T-cell (primary cell): ENCODE measurements at regions of chr3 and their contacts with region 1.

Region 1: GRCh38 chr3:88031642-88032077 is 27.1 kb downstream of the CGGBP1 start:
- DNase-seq: peak in 13 of 35 experiments; percentile 2 to 64 (median 6)
- ATAC-seq: peak; percentile 79 to 88 (median 84)
- H3K4me3 ChIP-seq: peak overlapping the region; percentile 39 to 68
- H3K4me3 Mint-ChIP-seq: peak overlapping the region; percentile 81 to 83 (median 81)
- H3K27ac ChIP-seq: peak overlapping the region; percentile 80
- H3K27ac Mint-ChIP-seq: peak overlapping the region; percentile 89 to 98
- H3K4me1 ChIP-seq: peaks cover 0 to 9% of the 10 kb centered on the region in 2 experiments
- H3K4me1 Mint-ChIP-seq: peaks cover 37 to 54% (median 41%) of the 10 kb centered on the region in 3 donors
- H3K27me3 ChIP-seq: no peaks in the 10 kb centered on the region
- H3K27me3 Mint-ChIP-seq: no peaks in the 10 kb centered on the region

Region 2: GRCh38 chr3:87236093-87236492 is 795.6 kb before region 1 on chr3:
- CTCF ChIA-PET with region 1: no interaction called
- POLR2A ChIA-PET with region 1: no interaction called
- DNase-seq: no peak
- ATAC-seq: no peak
- H3K4me3 ChIP-seq: no peak overlapping the region
- H3K4me3 Mint-ChIP-seq: no peak overlapping the region
- H3K27ac ChIP-seq: no peak overlapping the region
- H3K27ac Mint-ChIP-seq: no peak overlapping the region
- H3K4me1 ChIP-seq: no peaks in the 10 kb centered on the region
- H3K4me1 Mint-ChIP-seq: peaks cover 44 to 63% (median 53%) of the 10 kb centered on the region in 3 donors
- H3K27me3 ChIP-seq: no peaks in the 10 kb centered on the region
- H3K27me3 Mint-ChIP-seq: no peaks in the 10 kb centered on the region

Region 3: DNA sequence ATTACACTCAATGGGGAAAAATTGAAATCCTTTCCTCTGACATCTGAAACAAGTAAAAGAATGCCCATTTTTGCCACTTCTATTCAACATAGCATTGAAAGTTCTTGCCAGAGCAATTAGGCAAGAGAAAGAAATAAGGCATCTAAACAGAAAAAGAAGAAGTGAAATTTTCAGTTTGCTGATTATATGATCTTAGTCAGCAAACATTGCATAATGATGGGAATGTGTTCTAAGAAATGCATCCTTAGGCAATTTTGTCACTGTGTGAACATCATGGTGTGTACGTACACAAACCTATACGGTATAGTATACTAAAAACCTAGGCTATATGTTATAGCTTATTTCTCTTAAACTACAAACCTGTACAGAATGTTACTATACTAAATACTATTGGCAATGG is 250.8 kb before region 1 on chr3:
- CTCF ChIA-PET with region 1: no interaction called
- POLR2A ChIA-PET with region 1: no interaction called
- DNase-seq: no peak
- ATAC-seq: no peak
- H3K4me3 ChIP-seq: no peak overlapping the region
- H3K4me3 Mint-ChIP-seq: no peak overlapping the region
- H3K27ac ChIP-seq: no peak overlapping the region
- H3K27ac Mint-ChIP-seq: no peak overlapping the region
- H3K4me1 ChIP-seq: no peaks in the 10 kb centered on the region
- H3K4me1 Mint-ChIP-seq: no peaks in the 10 kb centered on the region
- H3K27me3 ChIP-seq: no peaks in the 10 kb centered on the region
- H3K27me3 Mint-ChIP-seq: peaks cover 14 to 20% of the 10 kb centered on the region in 2 donors

Region 4: DNA sequence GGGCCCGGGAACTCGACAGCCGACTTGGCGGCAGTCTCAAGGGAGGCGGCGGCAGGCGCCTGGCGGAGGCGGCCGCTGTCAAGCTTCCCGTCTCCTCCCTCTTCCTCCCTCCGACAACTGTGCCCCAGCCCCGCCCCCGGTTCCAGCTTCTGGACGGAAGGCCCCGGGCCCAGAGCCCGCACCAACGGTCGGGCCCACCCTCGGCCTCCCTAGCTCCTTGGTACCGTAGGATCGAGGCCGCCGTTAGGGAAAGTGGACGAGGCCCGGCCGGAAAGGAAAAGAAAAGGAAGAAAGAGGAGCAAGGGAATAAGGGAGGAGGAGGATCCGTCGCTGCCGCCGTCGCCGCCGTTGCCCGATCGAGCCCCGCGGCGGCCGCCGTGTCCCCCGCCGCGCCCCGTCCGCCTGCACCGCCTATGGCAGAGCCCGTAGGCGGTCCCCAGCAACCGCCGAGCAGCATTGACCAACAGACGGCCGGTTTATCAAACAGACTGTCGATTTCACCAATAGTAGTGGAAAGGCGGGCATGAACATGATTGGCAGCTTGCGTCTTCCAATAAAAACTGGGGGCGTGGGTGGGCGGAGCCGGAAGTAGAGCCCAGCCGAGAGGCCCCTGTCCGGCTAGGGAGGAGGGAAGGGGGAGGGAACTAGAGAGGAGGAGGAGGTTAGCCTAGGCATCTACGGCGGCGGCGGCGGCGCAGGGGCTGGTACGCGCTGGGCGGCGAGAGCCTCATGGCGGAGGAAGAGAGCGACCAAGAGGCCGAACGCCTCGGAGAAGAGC is 27.1 kb after region 1 on chr3 and contains the starts of genes CGGBP1 and ZNF654:
- CTCF ChIA-PET with region 1: interaction called in 1 of 2 experiments, 6 read pairs
- POLR2A ChIA-PET with region 1: interaction called, 5 to 11 read pairs
- DNase-seq: peak; percentile 92 to 100 (median 98)
- ATAC-seq: peak; percentile 91 to 94 (median 92)
- H3K4me3 ChIP-seq: peak within 1 kb of the TSS; percentile 96 to 97
- H3K4me3 Mint-ChIP-seq: peak within 1 kb of the TSS; percentile 97 to 100 (median 99)
- H3K27ac ChIP-seq: peak within 1 kb of the TSS; percentile 89
- H3K27ac Mint-ChIP-seq: peak within 1 kb of the TSS; percentile 97 to 98
- H3K4me1 ChIP-seq: peaks cover 3 to 42% of the 10 kb centered on the region in 2 experiments
- H3K4me1 Mint-ChIP-seq: peaks cover 60 to 72% (median 62%) of the 10 kb centered on the region in 3 donors
- H3K27me3 ChIP-seq: no peaks in the 10 kb centered on the region
- H3K27me3 Mint-ChIP-seq: no peaks in the 10 kb centered on the region
- total RNA-seq, gene CGGBP1: 95.7 to 131 (median 112) TPM
- total RNA-seq, gene ZNF654: 14.1 to 21.5 (median 17.1) TPM

Region 5: DNA sequence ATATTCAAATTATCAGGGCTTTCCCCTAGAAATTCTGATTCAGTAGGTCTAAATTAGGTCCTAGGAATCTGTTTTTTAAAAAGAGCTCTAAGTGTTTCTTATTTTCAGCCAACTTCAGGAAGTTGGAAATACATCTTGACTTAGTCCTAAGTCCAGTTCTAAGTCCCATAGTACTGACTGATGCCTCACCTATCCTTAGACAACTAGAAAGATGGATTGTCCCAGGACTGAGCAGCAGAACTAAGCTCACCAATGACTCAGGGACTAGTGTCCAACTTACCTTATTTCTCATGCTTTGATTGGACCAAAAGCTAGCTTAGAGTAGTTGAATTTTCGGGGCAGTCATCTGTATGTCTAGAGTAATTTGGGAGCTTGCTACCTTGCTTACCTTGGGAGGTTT is 91.9 kb after region 1 on chr3:
- CTCF ChIA-PET with region 1: no interaction called
- POLR2A ChIA-PET with region 1: no interaction called
- DNase-seq: no peak
- ATAC-seq: no peak
- H3K4me3 ChIP-seq: no peak overlapping the region
- H3K4me3 Mint-ChIP-seq: no peak overlapping the region
- H3K27ac ChIP-seq: no peak overlapping the region
- H3K27ac Mint-ChIP-seq: no peak overlapping the region
- H3K4me1 ChIP-seq: no peaks in the 10 kb centered on the region
- H3K4me1 Mint-ChIP-seq: peaks cover 9 to 13% (median 11%) of the 10 kb centered on the region in 3 donors
- H3K27me3 ChIP-seq: no peaks in the 10 kb centered on the region
- H3K27me3 Mint-ChIP-seq: no peaks in the 10 kb centered on the region